Right ventricle myocardium inferior (tissue), 1 donor: ENCODE measurements at regions of chr10 and their contacts with region 1.

Region 1: GRCh38 chr10:101446947-101447346 is 93.0 kb downstream of the BTRC start:
- DNase-seq: peak; percentile 57
- ATAC-seq: peak; percentile 76

Region 2: GRCh38 chr10:101354328-101355051 is 92.5 kb before region 1 on chr10:
- intact Hi-C with region 1: loop called (anchors 5 kb)
- DNase-seq: peak; percentile 81
- ATAC-seq: peak; percentile 22